MCF 10A (cell line): ENCODE measurements at regions of chr3 and their contacts with region 1.

Region 1: GRCh38 chr3:197002701-197003454 is 26.7 kb downstream of the MELTF start:
- DNase-seq: peak; percentile 78
- H3K4me3 Mint-ChIP-seq: peak overlapping the region; percentile 71
- H3K27ac Mint-ChIP-seq: no peak overlapping the region
- H3K4me1 Mint-ChIP-seq: peaks cover 10% of the 10 kb centered on the region
- H3K27me3 Mint-ChIP-seq: no peaks in the 10 kb centered on the region
- CTCF ChIP-seq: peak; percentile 59

Region 2: DNA sequence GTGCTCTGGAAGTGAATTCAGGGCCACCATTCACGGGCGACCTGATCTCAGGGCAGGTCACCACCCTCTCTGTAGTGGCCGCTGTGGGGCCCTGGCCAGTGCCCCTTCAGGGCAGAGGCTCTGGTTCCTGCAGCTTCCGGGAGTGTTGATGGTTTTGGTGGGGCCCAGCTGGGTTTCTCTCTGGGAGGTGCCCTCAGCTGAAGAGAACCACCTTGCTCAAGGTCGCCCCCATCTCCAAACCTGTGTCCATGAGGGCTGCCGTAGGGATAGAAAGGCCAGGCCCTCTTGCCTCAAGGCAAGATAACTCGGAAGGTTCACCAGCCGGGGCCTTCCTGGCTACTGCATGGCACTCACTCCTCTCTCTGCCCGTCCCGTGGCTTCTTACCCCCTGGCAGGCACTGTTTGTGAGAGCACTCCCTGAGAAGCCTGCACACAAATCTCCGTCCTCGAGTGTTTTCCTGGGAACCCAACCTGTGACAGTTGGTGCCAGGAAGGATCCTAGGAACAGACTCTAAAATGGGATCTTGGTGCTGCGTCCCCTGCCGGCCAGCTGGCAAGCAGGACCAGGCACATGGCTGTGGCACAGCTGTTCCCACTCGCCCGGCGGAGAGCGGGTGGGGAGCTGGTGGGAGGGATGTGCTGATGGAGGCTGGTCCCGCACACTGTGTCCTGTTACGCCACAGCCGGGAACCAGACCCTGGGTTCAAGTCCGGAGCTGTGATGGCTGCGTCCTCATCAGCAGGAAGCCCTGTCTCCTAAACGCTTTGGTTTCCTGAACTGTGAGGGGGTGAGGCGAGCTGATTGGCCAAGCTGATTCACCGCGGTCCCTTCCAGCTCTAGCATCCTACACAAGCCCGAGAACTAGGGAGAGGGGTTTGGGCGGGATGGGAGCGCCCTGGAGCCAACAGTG is 11.0 kb before region 1 on chr3:
- CTCF ChIA-PET with region 1: interaction called, 11 read pairs
- POLR2A ChIA-PET with region 1: interaction called, 3 read pairs
- intact Hi-C with region 1: no loop called
- DNase-seq: no peak
- H3K4me3 Mint-ChIP-seq: no peak overlapping the region
- H3K27ac Mint-ChIP-seq: no peak overlapping the region
- H3K4me1 Mint-ChIP-seq: peaks cover 3% of the 10 kb centered on the region
- H3K27me3 Mint-ChIP-seq: no peaks in the 10 kb centered on the region
- CTCF ChIP-seq: no peak

Region 3: DNA sequence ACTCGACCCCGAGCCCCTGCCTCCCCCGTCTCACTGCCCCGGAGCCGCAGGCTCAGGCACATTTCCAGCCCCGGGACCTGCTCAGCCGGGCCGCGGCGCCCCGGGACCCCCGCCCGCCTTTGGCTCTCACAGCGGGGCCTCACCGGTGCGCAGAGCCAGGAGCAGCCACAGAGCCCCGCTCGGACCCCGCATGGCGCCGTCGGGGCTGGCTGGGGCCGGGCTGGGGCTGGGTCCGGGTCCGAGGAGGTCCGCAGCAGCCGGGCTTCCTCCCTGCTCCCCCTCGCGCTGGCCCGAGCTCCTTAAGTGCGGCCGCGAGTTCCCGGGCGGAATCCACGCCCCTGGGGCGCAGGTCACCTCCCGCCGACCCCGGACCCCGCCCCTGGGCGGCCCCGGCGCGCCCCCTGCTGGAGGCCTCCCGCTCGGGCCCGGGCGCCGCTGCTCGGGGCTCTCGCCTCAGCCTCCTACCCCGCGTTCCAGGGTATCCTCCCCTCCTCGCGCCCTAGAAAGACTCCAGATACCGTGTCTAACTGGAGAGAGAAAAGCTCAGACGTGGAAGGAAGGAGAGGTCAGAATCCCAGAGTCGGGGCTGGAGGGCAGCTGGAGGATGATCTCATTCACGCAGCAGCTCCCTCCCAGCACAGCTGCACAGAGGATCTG is 26.8 kb after region 1 on chr3 and contains the start of gene MELTF:
- CTCF ChIA-PET with region 1: interaction called, 21 read pairs
- POLR2A ChIA-PET with region 1: interaction called, 4 read pairs
- intact Hi-C with region 1: loop called (anchors 1 kb)
- DNase-seq: peak; percentile 65
- H3K4me3 Mint-ChIP-seq: peak within 1 kb of the TSS; percentile 75
- H3K27ac Mint-ChIP-seq: no peak within 1 kb of the TSS
- H3K4me1 Mint-ChIP-seq: peaks cover 25% of the 10 kb centered on the region
- H3K27me3 Mint-ChIP-seq: no peaks in the 10 kb centered on the region
- CTCF ChIP-seq: peak; percentile 88
- total RNA-seq, gene MELTF: 9.1 and 20.6 TPM in 2 replicates

Region 4: GRCh38 chr3:197168606-197169005 is 165.7 kb after region 1 on chr3:
- CTCF ChIA-PET with region 1: no interaction called
- POLR2A ChIA-PET with region 1: no interaction called
- intact Hi-C with region 1: no loop called
- DNase-seq: no peak
- H3K4me3 Mint-ChIP-seq: no peak overlapping the region
- H3K27ac Mint-ChIP-seq: no peak overlapping the region
- H3K4me1 Mint-ChIP-seq: peaks cover 10% of the 10 kb centered on the region
- H3K27me3 Mint-ChIP-seq: no peaks in the 10 kb centered on the region
- CTCF ChIP-seq: no peak

Region 5: DNA sequence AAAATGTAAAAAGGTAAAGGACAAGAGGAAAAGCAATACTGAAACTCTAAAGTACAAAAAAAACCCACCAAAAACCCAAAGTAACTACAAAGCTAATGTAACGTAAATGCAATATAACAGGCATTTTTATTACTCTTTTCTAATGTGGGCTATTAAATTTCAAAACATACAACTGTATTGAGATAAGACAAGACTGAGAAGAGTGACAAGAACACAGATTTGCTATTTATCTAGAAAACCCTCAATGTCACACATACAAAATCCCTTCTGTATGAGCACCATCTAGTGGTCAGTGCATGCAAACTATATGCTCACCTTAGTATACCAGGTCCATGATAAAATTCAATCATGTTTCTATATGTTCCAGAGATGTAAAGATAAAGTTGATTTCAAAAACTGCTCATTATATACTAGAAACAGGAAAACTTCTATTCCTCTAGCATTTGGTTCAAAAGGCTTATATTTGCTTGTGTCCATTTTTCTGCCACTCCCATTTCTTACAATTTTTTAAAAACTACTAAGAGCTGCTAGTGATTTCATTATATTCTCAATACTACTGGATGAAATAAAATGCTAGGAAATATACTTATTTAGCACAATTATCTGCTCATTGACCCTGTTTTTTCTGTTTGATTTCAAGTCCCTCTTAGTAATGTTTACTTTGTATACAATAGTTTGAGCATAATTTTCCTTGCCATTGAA is 184.2 kb after region 1 on chr3:
- CTCF ChIA-PET with region 1: interaction called, 4 read pairs
- POLR2A ChIA-PET with region 1: no interaction called
- intact Hi-C with region 1: loop called (anchors 1 kb)
- DNase-seq: peak; percentile 77
- H3K4me3 Mint-ChIP-seq: no peak overlapping the region
- H3K27ac Mint-ChIP-seq: no peak overlapping the region
- H3K4me1 Mint-ChIP-seq: peaks cover 11% of the 10 kb centered on the region
- H3K27me3 Mint-ChIP-seq: no peaks in the 10 kb centered on the region
- CTCF ChIP-seq: peak; percentile 64

Region 6: GRCh38 chr3:197516517-197516889 is 513.6 kb after region 1 on chr3:
- CTCF ChIA-PET with region 1: no interaction called
- POLR2A ChIA-PET with region 1: no interaction called
- intact Hi-C with region 1: loop called (anchors 10 kb)
- DNase-seq: peak; percentile 97
- H3K4me3 Mint-ChIP-seq: peak overlapping the region; percentile 18
- H3K27ac Mint-ChIP-seq: peak overlapping the region; percentile 67
- H3K4me1 Mint-ChIP-seq: peaks cover 23% of the 10 kb centered on the region
- H3K27me3 Mint-ChIP-seq: no peaks in the 10 kb centered on the region
- CTCF ChIP-seq: no peak